Dendritic cell treated with granulocyte-macrophage colony-stimulating factor and Interleukin-4, amounts not matched to agents 40 ng/mL and 50 ng/mL, for 4 days (primary cell): ENCODE measurements at regions of chr11 and their contacts with region 1.

Region 1: GRCh38 chr11:62542750-62543567 is 3.6 kb downstream of the AHNAK start:
- H3K4me3 Mint-ChIP-seq: peak overlapping the region; percentile 97
- H3K27ac Mint-ChIP-seq: peak overlapping the region; percentile 95
- H3K4me1 Mint-ChIP-seq: peaks cover 70% of the 10 kb centered on the region
- H3K27me3 Mint-ChIP-seq: peaks cover 3% of the 10 kb centered on the region

Region 2: GRCh38 chr11:62394825-62395538 is 148.0 kb before region 1 on chr11:
- intact Hi-C with region 1: loop called (anchors 5 kb)
- H3K4me3 Mint-ChIP-seq: no peak overlapping the region
- H3K27ac Mint-ChIP-seq: no peak overlapping the region
- H3K4me1 Mint-ChIP-seq: peaks cover 50% of the 10 kb centered on the region
- H3K27me3 Mint-ChIP-seq: no peaks in the 10 kb centered on the region

Region 3: DNA sequence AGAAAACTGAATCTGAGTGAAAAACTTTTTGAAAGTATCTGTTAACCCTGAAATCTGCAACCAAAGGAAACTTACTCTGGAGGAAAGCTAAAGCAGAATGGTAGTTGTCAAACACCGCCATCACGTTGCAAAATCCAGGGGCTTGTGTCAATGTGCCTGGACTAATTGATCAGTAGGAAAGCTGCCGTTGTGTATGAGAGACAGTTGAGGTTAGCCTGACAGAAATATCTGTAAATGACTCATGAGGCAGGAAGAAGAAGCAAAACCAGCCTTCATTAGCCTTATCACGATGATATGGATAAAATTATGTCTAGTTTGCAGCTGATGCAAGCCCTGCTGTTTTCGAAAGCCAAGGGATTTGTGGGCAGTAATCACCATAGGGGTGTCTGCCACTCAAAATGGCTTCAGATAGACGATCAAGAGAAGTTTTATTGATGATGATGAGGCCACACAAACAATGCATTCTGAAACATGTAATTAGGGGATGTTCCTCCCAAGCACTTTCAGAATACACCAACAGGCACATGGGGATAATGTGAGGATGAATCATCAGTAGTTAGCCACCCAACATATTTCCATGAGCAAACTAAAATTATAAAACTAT is 115.2 kb before region 1 on chr11:
- intact Hi-C with region 1: loop called (anchors 5 kb)
- H3K4me3 Mint-ChIP-seq: peak overlapping the region; percentile 9
- H3K27ac Mint-ChIP-seq: peak overlapping the region; percentile 83
- H3K4me1 Mint-ChIP-seq: peaks cover 78% of the 10 kb centered on the region
- H3K27me3 Mint-ChIP-seq: peaks cover 5% of the 10 kb centered on the region

Region 4: GRCh38 chr11:62497132-62497915 is 45.6 kb before region 1 on chr11:
- intact Hi-C with region 1: loop called (anchors 5 kb)
- H3K4me3 Mint-ChIP-seq: no peak overlapping the region
- H3K27ac Mint-ChIP-seq: peak overlapping the region; percentile 60
- H3K4me1 Mint-ChIP-seq: peaks cover 46% of the 10 kb centered on the region
- H3K27me3 Mint-ChIP-seq: peaks cover 3% of the 10 kb centered on the region

Region 5: GRCh38 chr11:62508268-62509058 is 34.5 kb before region 1 on chr11:
- intact Hi-C with region 1: no loop called
- H3K4me3 Mint-ChIP-seq: no peak overlapping the region
- H3K27ac Mint-ChIP-seq: peak overlapping the region; percentile 78
- H3K4me1 Mint-ChIP-seq: peaks cover 79% of the 10 kb centered on the region
- H3K27me3 Mint-ChIP-seq: peaks cover 3% of the 10 kb centered on the region